ENCODE measurements at regions of chr22 and their contacts with region 1.

Region 1: GRCh38 chr22:38069372-38070249 is 12.4 kb downstream of the PICK1 start:
- DNase-seq: peak; percentile 77 to 93 (median 88)
- H3K4me3 ChIP-seq: peak overlapping the region in 12 of 59 donors; percentile 2 to 43 (median 15)
- H3K27ac ChIP-seq: peak overlapping the region; percentile 70 to 100 (median 97)
- H3K27me3 ChIP-seq: no peaks in the 10 kb centered on the region
- CTCF ChIP-seq: peak in 55 of 56 donors; percentile 58 to 92 (median 78)

Region 2: GRCh38 chr22:37920126-37920525 is 149.5 kb before region 1 on chr22:
- intact Hi-C with region 1: no loop called
- DNase-seq: no peak
- H3K4me3 ChIP-seq: no peak overlapping the region
- H3K27ac ChIP-seq: peak overlapping the region in 1 of 59 donors; percentile 3
- H3K27me3 ChIP-seq: no peaks in the 10 kb centered on the region
- CTCF ChIP-seq: no peak

Region 3: DNA sequence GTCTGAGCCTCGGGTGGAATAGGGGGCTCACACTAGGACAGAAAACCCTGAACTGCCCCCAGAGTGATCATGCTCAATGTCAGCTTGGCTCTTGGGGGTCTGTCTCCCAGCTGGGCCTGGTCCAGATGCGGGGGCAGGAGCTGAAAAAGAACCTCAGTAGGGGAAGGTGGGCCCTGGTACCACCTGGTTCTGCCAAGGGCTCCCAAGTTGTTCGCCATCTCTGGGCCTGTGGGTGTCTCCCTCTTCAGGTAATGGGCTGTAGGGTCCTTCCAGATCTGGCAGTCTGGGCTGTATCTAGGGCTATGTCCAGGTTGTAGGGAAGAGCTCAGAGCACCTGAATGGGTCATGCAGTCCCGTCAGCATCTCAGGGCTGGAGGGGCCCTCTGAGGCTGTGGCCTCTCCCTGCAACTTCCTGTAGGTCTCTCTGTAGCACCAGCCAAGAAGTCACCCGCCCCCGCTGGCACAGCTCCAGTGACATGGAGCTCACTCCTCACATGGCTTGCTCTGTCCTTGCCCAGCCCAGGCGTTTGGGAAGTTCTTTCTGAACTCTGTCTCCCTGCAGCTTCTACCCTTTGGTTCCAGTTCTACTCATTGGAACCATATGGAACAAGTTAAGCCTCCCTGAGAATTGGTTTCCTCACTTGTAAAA is 52.2 kb before region 1 on chr22:
- intact Hi-C with region 1: no loop called
- DNase-seq: peak in 9 of 10 donors; percentile 81 to 89 (median 85)
- H3K4me3 ChIP-seq: peak overlapping the region in 31 of 59 donors; percentile 1 to 46 (median 30)
- H3K27ac ChIP-seq: peak overlapping the region; percentile 79 to 100 (median 99)
- H3K27me3 ChIP-seq: no peaks in the 10 kb centered on the region
- CTCF ChIP-seq: peak in 3 of 56 donors; percentile 10 to 13 (median 10)

Region 4: DNA sequence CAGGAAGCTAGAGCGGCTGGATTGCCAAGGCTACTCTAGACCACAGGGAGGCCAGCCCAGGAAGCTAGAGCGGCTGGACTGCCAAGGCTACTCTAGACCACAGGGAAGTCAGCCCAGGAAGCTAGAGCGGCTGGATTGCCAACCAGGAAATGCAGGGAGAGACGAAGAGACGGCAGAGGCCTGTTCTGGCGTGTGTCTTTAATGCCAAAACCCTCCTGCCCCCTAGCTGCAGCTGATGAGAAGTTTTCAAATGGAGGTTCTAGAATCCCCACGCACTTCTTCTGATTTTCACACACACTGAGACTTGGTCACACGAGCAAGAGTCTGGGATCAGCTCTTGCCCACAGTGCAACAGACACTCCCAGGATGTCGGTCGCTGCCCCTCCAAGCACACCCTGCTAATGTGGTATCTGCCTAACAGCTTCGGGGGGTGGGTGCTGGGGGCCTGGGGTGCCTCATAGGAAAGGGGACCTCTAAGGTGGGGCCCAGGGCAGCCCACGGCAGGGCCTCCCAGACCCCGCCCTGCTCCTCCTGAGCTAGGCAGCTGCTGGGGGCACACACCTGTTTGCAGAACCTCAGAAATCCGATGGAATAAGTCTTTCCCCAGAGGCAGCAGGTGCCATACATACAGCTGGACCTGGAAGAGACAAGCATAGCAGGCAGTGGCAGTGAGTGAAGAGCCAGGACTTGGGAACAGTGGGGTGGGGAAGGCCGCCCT is 160.7 kb after region 1 on chr22:
- intact Hi-C with region 1: loop called (anchors 5 to 10 kb)
- DNase-seq: peak in 4 of 10 donors; percentile 57 to 74 (median 64)
- H3K4me3 ChIP-seq: no peak overlapping the region
- H3K27ac ChIP-seq: peak overlapping the region in 55 of 59 donors; percentile 1 to 99 (median 79)
- H3K27me3 ChIP-seq: no peaks in the 10 kb centered on the region
- CTCF ChIP-seq: peak; percentile 18 to 70 (median 57)